ENCODE measurements at regions of chr16 and their contacts with region 1.

Region 1: GRCh38 chr16:89093602-89094251 is at the start of gene ACSF3:
- DNase-seq: peak; percentile 64
- ATAC-seq: peak; percentile 33
- H3K4me3 Mint-ChIP-seq: peak within 1 kb of the TSS; percentile 85
- H3K27ac Mint-ChIP-seq: peak within 1 kb of the TSS; percentile 96
- H3K4me1 Mint-ChIP-seq: peaks cover 40% of the 10 kb centered on the region
- H3K27me3 Mint-ChIP-seq: peaks cover 2% of the 10 kb centered on the region
- CTCF ChIP-seq: no peak
- total RNA-seq, gene ACSF3: 44.6 to 45.9 TPM

Region 2: GRCh38 chr16:88941913-88942909 is 151.5 kb before region 1 on chr16:
- CTCF ChIA-PET with region 1: interaction called, 5 read pairs
- POLR2A ChIA-PET with region 1: no interaction called
- intact Hi-C with region 1: loop called (anchors 10 kb)
- DNase-seq: peak; percentile 72
- ATAC-seq: peak; percentile 70
- H3K4me3 Mint-ChIP-seq: peak overlapping the region; percentile 10
- H3K27ac Mint-ChIP-seq: no peak overlapping the region
- H3K4me1 Mint-ChIP-seq: peaks cover 9% of the 10 kb centered on the region
- H3K27me3 Mint-ChIP-seq: peaks cover 44% of the 10 kb centered on the region
- CTCF ChIP-seq: peak; percentile 93

Region 3: GRCh38 chr16:89026121-89026612 is 67.6 kb before region 1 on chr16:
- CTCF ChIA-PET with region 1: no interaction called
- POLR2A ChIA-PET with region 1: interaction called, 4 read pairs
- intact Hi-C with region 1: loop called (anchors 10 kb)
- DNase-seq: peak; percentile 89
- ATAC-seq: peak; percentile 98
- H3K4me3 Mint-ChIP-seq: no peak overlapping the region
- H3K27ac Mint-ChIP-seq: peak overlapping the region; percentile 86
- H3K4me1 Mint-ChIP-seq: peaks cover 30% of the 10 kb centered on the region
- H3K27me3 Mint-ChIP-seq: peaks cover 2% of the 10 kb centered on the region
- CTCF ChIP-seq: no peak

Region 4: DNA sequence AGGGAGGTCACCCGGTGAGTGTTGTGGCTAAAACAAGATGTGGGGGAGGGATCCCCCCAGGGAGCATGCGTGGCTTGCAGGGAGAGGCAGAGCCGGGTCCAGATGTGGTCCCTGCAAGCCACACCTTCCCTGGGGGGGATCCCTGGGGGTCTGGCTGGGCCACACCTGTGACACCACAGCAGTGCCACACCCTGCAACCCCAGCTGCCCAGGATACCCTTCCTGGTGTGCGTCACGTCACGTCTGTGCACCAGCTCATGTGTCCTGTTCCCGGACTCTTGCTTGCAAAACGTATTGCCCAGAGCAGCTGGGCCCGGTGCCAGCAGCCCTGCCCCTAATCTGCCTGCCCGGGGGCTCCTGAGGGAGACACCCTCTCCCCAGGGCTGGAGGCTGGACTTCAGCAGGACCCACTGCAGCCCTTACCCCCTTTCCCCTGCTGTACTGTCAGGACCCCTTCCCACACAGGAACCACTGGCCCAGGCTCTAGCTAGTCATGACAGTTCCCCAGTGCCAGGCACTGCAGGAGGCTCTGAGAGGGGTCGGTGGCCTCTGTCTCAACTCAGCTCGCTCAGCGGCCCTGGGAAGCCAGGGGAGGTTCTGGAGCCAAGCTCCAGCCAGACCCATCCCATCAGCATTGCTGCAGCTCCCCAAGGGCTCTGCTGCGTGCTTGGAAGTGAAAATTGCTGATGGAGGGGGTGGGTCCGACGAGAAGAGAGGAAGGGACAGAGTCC is 25.9 kb before region 1 on chr16:
- CTCF ChIA-PET with region 1: no interaction called
- POLR2A ChIA-PET with region 1: no interaction called
- intact Hi-C with region 1: no loop called
- DNase-seq: no peak
- ATAC-seq: no peak
- H3K4me3 Mint-ChIP-seq: no peak overlapping the region
- H3K27ac Mint-ChIP-seq: no peak overlapping the region
- H3K4me1 Mint-ChIP-seq: no peaks in the 10 kb centered on the region
- H3K27me3 Mint-ChIP-seq: no peaks in the 10 kb centered on the region
- CTCF ChIP-seq: no peak

Region 5: DNA sequence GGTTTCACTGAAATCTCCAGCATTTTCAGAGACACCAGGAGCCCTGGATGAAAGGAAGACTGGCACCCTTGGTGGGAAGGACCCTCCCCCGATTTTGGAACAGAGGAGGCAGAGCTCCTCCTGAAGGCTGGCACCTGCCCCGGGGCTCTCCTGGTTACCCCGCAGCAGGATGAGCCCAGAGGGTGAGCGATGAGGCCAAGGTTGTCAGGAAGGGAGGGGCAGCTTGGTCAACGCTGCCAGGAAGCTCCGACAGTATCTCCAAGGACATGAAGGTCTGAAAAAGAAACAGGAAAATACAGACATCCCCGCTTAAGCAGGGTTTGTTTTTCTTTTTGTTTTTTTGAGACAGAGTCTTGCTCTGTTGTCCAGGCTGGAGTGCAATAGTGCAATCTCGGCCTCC is 15.6 kb before region 1 on chr16:
- CTCF ChIA-PET with region 1: no interaction called
- POLR2A ChIA-PET with region 1: no interaction called
- intact Hi-C with region 1: no loop called
- DNase-seq: no peak
- ATAC-seq: no peak
- H3K4me3 Mint-ChIP-seq: no peak overlapping the region
- H3K27ac Mint-ChIP-seq: no peak overlapping the region
- H3K4me1 Mint-ChIP-seq: no peaks in the 10 kb centered on the region
- H3K27me3 Mint-ChIP-seq: no peaks in the 10 kb centered on the region
- CTCF ChIP-seq: no peak

Region 6: DNA sequence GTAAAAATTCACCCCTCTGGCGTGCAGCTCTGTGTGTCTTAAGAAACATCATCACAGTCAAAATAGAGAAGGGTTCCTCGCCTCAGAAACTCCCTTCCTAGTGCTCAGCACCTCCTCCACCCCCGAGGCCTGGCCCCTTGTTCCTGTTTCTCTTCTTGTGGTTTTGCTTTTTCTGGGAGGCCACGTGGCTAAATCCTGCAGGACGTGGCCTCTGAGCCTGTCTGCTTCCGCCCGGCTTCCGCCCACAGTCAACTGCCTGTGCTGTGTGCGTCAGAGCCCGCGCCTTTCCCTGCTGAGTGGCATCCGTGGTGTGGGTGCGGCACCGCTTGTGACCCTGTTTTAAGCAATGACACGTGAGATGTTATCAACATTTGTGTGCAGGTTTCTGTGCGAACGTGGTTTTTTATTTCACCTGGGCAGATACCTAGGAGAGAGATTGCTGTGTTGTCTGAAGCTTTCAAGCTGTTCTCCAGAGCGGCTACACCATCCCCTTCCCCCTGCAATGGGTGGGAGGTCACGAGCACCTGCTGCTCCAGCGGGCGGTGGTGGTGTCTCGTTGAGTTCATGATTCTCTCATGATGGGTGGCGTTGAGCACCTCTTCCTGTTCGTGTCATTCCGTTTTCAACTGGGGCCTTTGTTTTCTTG is 21.6 kb after region 1 on chr16:
- CTCF ChIA-PET with region 1: interaction called, 4 read pairs
- POLR2A ChIA-PET with region 1: interaction called, 20 read pairs
- intact Hi-C with region 1: loop called (anchors 1 kb)
- DNase-seq: peak; percentile 94
- ATAC-seq: peak; percentile 90
- H3K4me3 Mint-ChIP-seq: peak overlapping the region; percentile 66
- H3K27ac Mint-ChIP-seq: peak overlapping the region; percentile 91
- H3K4me1 Mint-ChIP-seq: peaks cover 28% of the 10 kb centered on the region
- H3K27me3 Mint-ChIP-seq: no peaks in the 10 kb centered on the region
- CTCF ChIP-seq: no peak

Measured in activated CD8-positive, alpha-beta T cell treated with anti-CD3 and anti-CD28 coated beads for 36 hours (primary cell).